Activated CD4-positive, alpha-beta memory T cell treated with anti-CD3 and anti-CD28 coated beads, Interleukin-2, amount 10 ng/mL, durations not matched to agents 7 days and 5 days (primary cell): ENCODE measurements at regions of chr11 and their contacts with region 1.

Region 1: DNA sequence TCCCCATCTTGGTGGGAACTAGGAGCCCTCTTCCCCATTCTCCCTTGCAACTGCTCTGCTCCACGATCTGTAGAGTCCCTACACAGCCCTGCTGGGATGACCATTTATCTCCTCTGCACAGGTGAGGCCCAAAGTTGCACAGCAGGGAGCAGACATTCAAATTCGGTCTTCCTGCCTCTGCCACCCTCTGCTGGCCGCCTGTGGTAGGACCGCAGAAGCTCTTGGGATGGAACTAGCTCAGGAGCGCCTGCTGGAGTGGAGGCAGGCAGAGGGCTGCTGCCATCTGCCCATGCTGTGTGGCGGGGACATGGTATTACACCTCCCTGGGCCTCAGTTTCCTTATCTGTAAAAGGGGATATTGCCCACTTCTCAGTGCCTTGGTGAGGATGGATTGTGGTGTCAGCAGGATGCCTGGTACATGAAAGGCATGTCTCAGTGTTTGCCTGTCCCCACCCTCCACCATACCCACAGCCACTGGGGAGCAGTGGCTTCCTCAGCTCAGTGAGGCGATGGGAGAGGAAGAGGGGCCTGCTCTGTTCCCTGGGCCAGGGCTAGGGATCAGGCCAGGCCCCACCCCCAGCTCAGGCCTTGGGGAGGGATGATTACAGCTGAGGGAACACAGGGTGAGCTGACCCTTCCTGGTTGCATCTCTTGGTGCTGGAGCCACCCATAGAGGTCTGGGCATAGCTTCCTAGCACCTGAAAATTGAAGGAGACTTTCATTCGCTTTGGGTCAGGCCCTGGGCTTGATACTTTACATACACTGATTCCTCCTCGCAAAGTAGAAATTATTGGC is 11.3 kb upstream of the OMP start:
- DNase-seq: peak; percentile 80
- H3K4me3 Mint-ChIP-seq: no peak overlapping the region
- H3K27ac Mint-ChIP-seq: no peak overlapping the region
- H3K4me1 Mint-ChIP-seq: peaks cover 6% of the 10 kb centered on the region
- H3K27me3 Mint-ChIP-seq: no peaks in the 10 kb centered on the region

Region 2: DNA sequence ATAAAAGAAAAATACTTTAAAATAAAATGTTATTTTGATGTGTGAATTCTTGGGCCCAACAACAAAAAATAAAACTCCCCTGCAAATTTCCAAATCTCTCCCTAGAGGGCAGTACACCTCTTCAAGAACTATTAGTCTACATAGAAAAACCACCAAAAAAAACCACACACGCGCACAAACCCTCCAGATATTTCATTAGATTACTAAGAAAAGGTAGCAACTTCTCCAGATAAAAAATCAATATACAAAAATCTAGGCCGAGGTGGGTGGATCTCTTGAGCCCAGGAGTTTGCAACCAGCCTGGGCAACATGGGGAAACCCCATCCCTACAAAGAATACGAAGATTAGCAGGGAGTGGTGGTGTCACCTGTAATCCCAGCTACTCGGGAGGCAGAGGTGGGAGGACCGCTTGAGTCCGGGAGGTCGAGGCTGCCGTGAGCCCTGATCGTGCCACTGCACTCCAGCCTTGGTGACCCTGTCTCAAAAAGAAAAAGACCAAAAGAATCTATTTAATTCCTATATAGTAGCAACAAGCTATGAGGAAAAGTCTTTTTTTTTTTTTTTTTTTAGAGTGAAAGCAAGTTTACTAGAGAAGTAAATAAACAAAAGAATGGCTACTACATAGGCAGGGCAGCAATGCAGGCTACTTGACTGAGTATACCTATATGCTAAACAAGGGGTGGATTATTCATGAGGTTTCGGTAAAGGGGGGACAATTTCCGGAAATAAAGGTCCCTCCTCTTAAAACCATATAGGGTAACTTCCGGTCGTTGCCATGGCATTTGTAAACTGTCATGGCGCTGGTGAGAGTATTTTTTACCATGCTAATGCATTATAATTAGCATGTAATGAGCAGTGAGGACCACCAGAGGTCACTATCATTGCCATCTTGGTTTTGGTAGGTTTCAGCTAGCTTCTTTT is 44.1 kb before region 1 on chr11:
- CTCF ChIA-PET with region 1: interaction called, 99 read pairs
- POLR2A ChIA-PET with region 1: interaction called, 8 read pairs
- DNase-seq: peak; percentile 79
- H3K4me3 Mint-ChIP-seq: peak overlapping the region; percentile 47
- H3K27ac Mint-ChIP-seq: peak overlapping the region; percentile 47
- H3K4me1 Mint-ChIP-seq: peaks cover 14% of the 10 kb centered on the region
- H3K27me3 Mint-ChIP-seq: peaks cover 21% of the 10 kb centered on the region

Region 3: GRCh38 chr11:77053217-77054015 is 37.9 kb before region 1 on chr11:
- CTCF ChIA-PET with region 1: interaction called, 99 read pairs
- POLR2A ChIA-PET with region 1: interaction called, 8 read pairs
- DNase-seq: no peak
- H3K4me3 Mint-ChIP-seq: no peak overlapping the region
- H3K27ac Mint-ChIP-seq: no peak overlapping the region
- H3K4me1 Mint-ChIP-seq: peaks cover 1% of the 10 kb centered on the region
- H3K27me3 Mint-ChIP-seq: peaks cover 2% of the 10 kb centered on the region

Region 4: GRCh38 chr11:77062924-77063323 is 28.4 kb before region 1 on chr11:
- CTCF ChIA-PET with region 1: interaction called, 13 read pairs
- POLR2A ChIA-PET with region 1: no interaction called
- DNase-seq: no peak
- H3K4me3 Mint-ChIP-seq: no peak overlapping the region
- H3K27ac Mint-ChIP-seq: no peak overlapping the region
- H3K4me1 Mint-ChIP-seq: peaks cover 4% of the 10 kb centered on the region
- H3K27me3 Mint-ChIP-seq: peaks cover 39% of the 10 kb centered on the region